PC-9 (cell line): ENCODE measurements at regions of chr19 and their contacts with region 1.

Region 1: DNA sequence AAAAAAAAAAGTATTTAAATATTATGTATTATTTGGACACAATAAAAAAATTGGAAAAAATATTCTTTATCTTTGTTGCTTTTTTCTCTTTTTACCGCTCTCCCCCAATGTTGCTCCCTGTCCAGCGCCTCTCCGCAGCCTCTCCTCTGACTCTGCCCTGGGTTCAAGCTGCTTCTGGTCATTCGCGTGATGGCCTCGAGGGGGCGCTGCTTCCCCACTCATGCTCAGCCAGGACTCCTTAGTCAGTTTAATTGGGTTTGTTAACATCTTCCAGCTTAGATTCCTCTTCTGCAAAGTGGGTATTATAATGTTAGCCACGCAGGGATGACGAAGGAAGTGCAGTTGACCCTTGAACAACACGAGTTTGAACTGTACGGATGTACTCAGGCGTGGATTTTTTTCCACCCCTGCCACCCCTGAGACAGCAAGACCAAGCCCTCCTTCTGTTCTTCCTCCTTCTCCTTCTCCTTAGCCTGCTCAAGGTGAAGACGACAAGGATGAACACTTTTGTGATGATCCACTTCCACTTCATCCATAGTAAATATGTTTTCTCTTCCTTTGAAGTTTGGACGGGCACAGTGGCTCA is 4.9 kb upstream of the NWD1 start:
- DNase-seq: peak; percentile 43 to 57
- H3K4me3 ChIP-seq: no peak overlapping the region
- H3K27ac ChIP-seq: no peak overlapping the region
- H3K4me1 ChIP-seq: peaks cover 24% of the 10 kb centered on the region
- H3K27me3 ChIP-seq: no peaks in the 10 kb centered on the region
- CTCF ChIP-seq: peak; percentile 100

Region 2: DNA sequence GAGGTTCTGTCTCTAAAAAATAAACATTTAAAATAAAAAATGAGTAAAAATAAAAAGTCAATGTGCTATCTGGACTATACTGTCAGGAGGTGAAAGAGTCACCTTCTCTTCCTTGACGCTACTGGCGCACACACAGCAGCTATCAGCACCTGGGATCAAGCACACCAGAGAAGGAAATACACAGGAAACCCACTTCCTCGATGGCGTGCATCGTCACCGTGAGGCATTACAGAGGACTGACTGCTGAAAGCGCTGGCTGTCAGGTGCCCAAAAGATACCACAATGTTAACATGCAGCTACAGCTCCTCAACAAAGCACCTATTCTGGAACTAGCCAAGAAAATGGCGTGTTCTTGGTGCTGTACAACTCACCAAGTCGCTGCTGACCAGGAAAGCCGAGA is 148.6 kb before region 1 on chr19:
- CTCF ChIA-PET with region 1: no interaction called
- POLR2A ChIA-PET with region 1: no interaction called
- intact Hi-C with region 1: loop called (anchors 5 kb)
- DNase-seq: no peak
- H3K4me3 ChIP-seq: no peak overlapping the region
- H3K27ac ChIP-seq: no peak overlapping the region
- H3K4me1 ChIP-seq: peaks cover 44% of the 10 kb centered on the region
- H3K27me3 ChIP-seq: no peaks in the 10 kb centered on the region
- CTCF ChIP-seq: no peak

Region 3: GRCh38 chr19:16688084-16688483 is 26.7 kb before region 1 on chr19:
- CTCF ChIA-PET with region 1: interaction called, 4 read pairs
- POLR2A ChIA-PET with region 1: interaction called, 10 read pairs
- intact Hi-C with region 1: no loop called
- DNase-seq: no peak
- H3K4me3 ChIP-seq: no peak overlapping the region
- H3K27ac ChIP-seq: no peak overlapping the region
- H3K4me1 ChIP-seq: peaks cover 14% of the 10 kb centered on the region
- H3K27me3 ChIP-seq: no peaks in the 10 kb centered on the region
- CTCF ChIP-seq: no peak

Region 4: GRCh38 chr19:16771618-16772017 is 56.8 kb after region 1 on chr19:
- CTCF ChIA-PET with region 1: no interaction called
- POLR2A ChIA-PET with region 1: no interaction called
- intact Hi-C with region 1: loop called (anchors 2 kb)
- DNase-seq: peak; percentile 68
- H3K4me3 ChIP-seq: no peak overlapping the region
- H3K27ac ChIP-seq: no peak overlapping the region
- H3K4me1 ChIP-seq: peaks cover 10% of the 10 kb centered on the region; the same call in 1 of the 2 replicates
- H3K27me3 ChIP-seq: no peaks in the 10 kb centered on the region
- CTCF ChIP-seq: peak; percentile 97

Region 5: GRCh38 chr19:16836115-16837034 is 121.6 kb after region 1 on chr19:
- CTCF ChIA-PET with region 1: no interaction called
- POLR2A ChIA-PET with region 1: no interaction called
- intact Hi-C with region 1: no loop called
- DNase-seq: no peak
- H3K4me3 ChIP-seq: no peak overlapping the region
- H3K27ac ChIP-seq: no peak overlapping the region
- H3K4me1 ChIP-seq: no peaks in the 10 kb centered on the region
- H3K27me3 ChIP-seq: no peaks in the 10 kb centered on the region
- CTCF ChIP-seq: no peak

Region 6: DNA sequence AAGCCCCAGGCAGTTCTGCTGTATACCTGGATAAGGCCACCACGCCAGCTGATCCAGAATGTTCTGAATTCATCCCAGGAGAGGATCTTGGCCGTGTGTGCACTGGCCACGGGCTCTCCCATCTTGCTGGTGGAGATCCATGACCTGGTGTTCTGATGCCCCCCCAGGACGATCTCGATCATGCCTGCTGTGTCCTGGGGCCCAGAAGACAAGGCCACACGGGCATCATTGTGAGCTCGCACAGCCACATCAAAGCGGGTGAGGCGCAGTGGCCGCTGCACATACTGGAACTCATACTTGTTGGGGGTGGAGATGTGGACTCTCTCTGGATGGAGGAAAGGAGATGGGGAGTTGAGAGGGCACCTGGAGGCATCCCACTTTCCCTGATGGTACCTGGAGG is 214.1 kb after region 1 on chr19:
- CTCF ChIA-PET with region 1: no interaction called
- POLR2A ChIA-PET with region 1: no interaction called
- intact Hi-C with region 1: no loop called
- DNase-seq: peak in 1 of 2 experiments; percentile 25
- H3K4me3 ChIP-seq: no peak overlapping the region
- H3K27ac ChIP-seq: no peak overlapping the region
- H3K4me1 ChIP-seq: no peaks in the 10 kb centered on the region
- H3K27me3 ChIP-seq: no peaks in the 10 kb centered on the region
- CTCF ChIP-seq: no peak

Region 7: GRCh38 chr19:17052439-17053210 is 337.8 kb after region 1 on chr19:
- CTCF ChIA-PET with region 1: interaction called, 5 read pairs
- POLR2A ChIA-PET with region 1: no interaction called
- intact Hi-C with region 1: loop called (anchors 1 kb)
- DNase-seq: peak; percentile 57 to 61
- H3K4me3 ChIP-seq: no peak overlapping the region
- H3K27ac ChIP-seq: no peak overlapping the region
- H3K4me1 ChIP-seq: peaks cover 12% of the 10 kb centered on the region
- H3K27me3 ChIP-seq: no peaks in the 10 kb centered on the region
- CTCF ChIP-seq: peak; percentile 89